H1 (cell line): ENCODE measurements at regions of chr4 and their contacts with region 1.

Region 1: GRCh38 chr4:7876201-7876875 is 63.3 kb downstream of the AFAP1 start:
- DNase-seq: no peak
- H3K4me3 ChIP-seq: no peak overlapping the region
- H3K27ac ChIP-seq: no peak overlapping the region
- H3K4me1 ChIP-seq: peaks cover 0 to 3% (median 0%) of the 10 kb centered on the region in 4 experiments; a peak in 1 of 7 replicates
- H3K27me3 ChIP-seq: no peaks in the 10 kb centered on the region
- CTCF ChIP-seq: peak; percentile 39 to 62 (median 42); a peak in 3 of 4 replicates
- EP300 ChIP-seq: no peak
- POLR2A ChIP-seq: no peak
- RAD21 ChIP-seq: peak; percentile 34 to 58; a peak in 3 of 4 replicates

Region 2: DNA sequence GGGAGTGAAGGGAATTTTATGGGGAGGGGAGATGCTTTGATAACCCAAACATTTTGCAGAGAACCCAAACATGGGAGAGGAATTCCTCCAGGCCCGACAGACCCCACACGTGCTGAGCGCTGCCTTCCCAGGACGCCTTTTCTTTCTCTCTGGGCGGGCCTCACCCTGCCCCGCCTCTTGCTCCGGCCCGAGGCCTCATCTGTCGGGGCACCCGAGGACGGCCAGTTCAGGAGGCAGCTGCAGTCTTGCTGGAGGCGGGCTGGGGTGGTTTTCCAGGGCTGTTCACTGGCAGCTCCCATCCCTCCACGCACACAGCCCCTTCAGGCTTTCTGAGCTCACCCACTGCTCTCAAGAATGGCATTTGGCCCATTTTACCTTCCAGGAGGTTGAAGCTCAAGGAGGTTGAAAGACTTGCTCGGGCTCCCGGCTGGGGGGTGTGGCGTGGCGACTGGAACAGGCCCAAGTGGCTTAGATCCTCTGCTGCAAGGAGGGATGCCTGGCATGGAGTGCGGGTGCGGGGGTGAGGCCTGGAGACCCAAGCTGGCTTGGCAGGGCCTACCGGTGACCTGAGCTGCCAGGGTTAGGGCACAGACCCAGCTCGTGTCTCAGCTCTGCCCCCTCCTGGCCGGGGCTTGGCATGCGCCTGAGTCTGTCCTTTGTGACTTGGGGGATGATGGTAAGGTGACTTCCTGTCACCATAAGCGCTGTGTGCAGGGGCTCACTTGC is 540.8 kb before region 1 on chr4:
- CTCF ChIA-PET with region 1: no interaction called
- POLR2A ChIA-PET with region 1: no interaction called
- DNase-seq: peak; percentile 53 to 98
- H3K4me3 ChIP-seq: no peak overlapping the region
- H3K27ac ChIP-seq: no peak overlapping the region
- H3K4me1 ChIP-seq: peaks cover 0 to 6% (median 4%) of the 10 kb centered on the region in 4 experiments; a peak in 4 of 7 replicates
- H3K27me3 ChIP-seq: no peaks in the 10 kb centered on the region; a peak in 1 of 7 replicates
- CTCF ChIP-seq: peak in 2 of 3 experiments; percentile 87 to 97; a peak in 3 of 4 replicates
- EP300 ChIP-seq: no peak
- POLR2A ChIP-seq: no peak
- RAD21 ChIP-seq: peak; percentile 84 to 91

Region 3: DNA sequence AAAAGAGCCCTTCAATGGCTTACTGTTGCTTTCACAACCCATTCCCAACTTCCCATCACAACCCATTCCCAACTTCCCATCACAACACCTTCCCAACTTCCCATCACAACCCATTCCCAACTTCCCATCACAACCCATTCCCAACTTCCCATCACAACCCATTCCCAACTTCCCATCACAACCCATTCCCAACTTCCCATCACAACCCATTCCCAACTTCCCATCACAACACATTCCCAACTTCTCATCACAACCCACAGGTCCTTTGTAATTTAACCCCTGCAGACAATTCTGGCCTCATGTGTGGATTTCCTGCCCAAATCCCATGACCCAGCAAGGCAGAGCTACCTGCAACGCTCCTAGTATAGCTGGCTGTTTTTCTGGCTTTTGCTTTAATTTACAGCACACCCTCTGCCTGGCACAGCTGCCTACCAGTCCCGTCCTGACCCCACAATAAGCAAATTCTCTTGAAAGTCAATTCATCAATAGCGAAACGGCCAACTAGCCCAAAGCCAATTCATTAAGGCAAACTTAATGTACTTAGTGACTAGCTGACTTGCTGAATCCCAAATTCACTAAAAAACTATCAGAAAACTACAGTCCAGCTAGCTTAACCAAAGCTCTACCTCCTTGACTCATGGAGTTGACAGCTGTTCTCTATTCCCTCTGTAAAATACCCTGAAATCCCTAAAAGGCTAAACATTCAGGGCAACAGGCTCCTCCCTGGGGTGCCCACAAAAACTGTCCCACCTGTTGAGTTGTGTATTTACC is 12.2 kb before region 1 on chr4:
- CTCF ChIA-PET with region 1: interaction called, 38 read pairs
- POLR2A ChIA-PET with region 1: interaction called, 3 read pairs
- DNase-seq: no peak
- H3K4me3 ChIP-seq: no peak overlapping the region
- H3K27ac ChIP-seq: no peak overlapping the region
- H3K4me1 ChIP-seq: peaks cover 5 to 15% (median 10%) of the 10 kb centered on the region in 4 experiments
- H3K27me3 ChIP-seq: no peaks in the 10 kb centered on the region
- CTCF ChIP-seq: no peak
- EP300 ChIP-seq: no peak
- POLR2A ChIP-seq: no peak
- RAD21 ChIP-seq: no peak

Region 4: GRCh38 chr4:7929118-7929951 is 53.0 kb after region 1 on chr4:
- CTCF ChIA-PET with region 1: interaction called, 41 read pairs
- POLR2A ChIA-PET with region 1: interaction called, 3 read pairs
- DNase-seq: peak in 1 of 2 experiments; percentile 25
- H3K4me3 ChIP-seq: no peak overlapping the region
- H3K27ac ChIP-seq: no peak overlapping the region
- H3K4me1 ChIP-seq: peaks cover 6 to 12% (median 10%) of the 10 kb centered on the region in 4 experiments; a peak in 6 of 7 replicates
- H3K27me3 ChIP-seq: no peaks in the 10 kb centered on the region
- CTCF ChIP-seq: peak in 2 of 3 experiments; percentile 30 to 39; a peak in 2 of 4 replicates
- EP300 ChIP-seq: peak in 1 of 2 experiments; percentile 36; a peak in 1 of 3 replicates
- POLR2A ChIP-seq: no peak
- RAD21 ChIP-seq: peak; percentile 53 to 65

Region 5: GRCh38 chr4:7939377-7940108 is 63.2 kb after region 1 on chr4 and contains the start of gene AFAP1:
- CTCF ChIA-PET with region 1: interaction called, 10 read pairs
- POLR2A ChIA-PET with region 1: no interaction called
- DNase-seq: peak in 1 of 2 experiments; percentile 97
- H3K4me3 ChIP-seq: peak within 1 kb of the TSS; percentile 36 to 85 (median 54)
- H3K27ac ChIP-seq: no peak within 1 kb of the TSS
- H3K4me1 ChIP-seq: peaks cover 8 to 24% (median 12%) of the 10 kb centered on the region in 4 experiments; a peak in 6 of 7 replicates
- H3K27me3 ChIP-seq: no peaks in the 10 kb centered on the region
- CTCF ChIP-seq: no peak
- EP300 ChIP-seq: no peak
- POLR2A ChIP-seq: 0 out of 3 replicates have a peak, but pooled peaks of 1 of the 2 experiments have one; percentile 26
- RAD21 ChIP-seq: peak in 1 of 2 experiments; percentile 23; a peak in 1 of 4 replicates
- total RNA-seq, gene AFAP1: 16.2 and 18.2 TPM in 2 replicates